Dorsolateral prefrontal cortex (tissue), 120 donors: ENCODE measurements at regions of chr6 and their contacts with region 1.

Region 1: GRCh38 chr6:105336986-105337385 is 65.9 kb downstream of the PREP start:
- DNase-seq: no peak
- H3K4me3 ChIP-seq: no peak overlapping the region
- H3K27ac ChIP-seq: no peak overlapping the region
- H3K27me3 ChIP-seq: no peaks in the 10 kb centered on the region
- CTCF ChIP-seq: no peak

Region 2: GRCh38 chr6:105397987-105398386 is 61.0 kb after region 1 on chr6:
- intact Hi-C with region 1: loop called in 1 of 2 experiments (anchors 2 kb)
- DNase-seq: peak in 2 of 10 donors; percentile 25 to 42
- H3K4me3 ChIP-seq: peak overlapping the region in 3 of 59 donors; percentile 6 to 37 (median 19)
- H3K27ac ChIP-seq: peak overlapping the region in 3 of 59 donors; percentile 17 to 40 (median 24)
- H3K27me3 ChIP-seq: no peaks in the 10 kb centered on the region
- CTCF ChIP-seq: no peak